ENCODE measurements at regions of chr5 and their contacts with region 1.

Region 1: GRCh38 chr5:158819840-158820620 is 279.7 kb downstream of the EBF1 start:
- DNase-seq: peak; percentile 41
- ATAC-seq: peak; percentile 99
- H3K4me3 Mint-ChIP-seq: no peak overlapping the region
- H3K27ac Mint-ChIP-seq: peak overlapping the region; percentile 48
- H3K4me1 Mint-ChIP-seq: peaks cover 31% of the 10 kb centered on the region
- H3K27me3 Mint-ChIP-seq: peaks cover 10% of the 10 kb centered on the region

Region 2: GRCh38 chr5:158875272-158875679 is 55.2 kb after region 1 on chr5:
- CTCF ChIA-PET with region 1: no interaction called
- POLR2A ChIA-PET with region 1: no interaction called
- intact Hi-C with region 1: loop called (anchors 1 to 2 kb)
- DNase-seq: no peak
- ATAC-seq: peak; percentile 71
- H3K4me3 Mint-ChIP-seq: peak overlapping the region; percentile 13
- H3K27ac Mint-ChIP-seq: no peak overlapping the region
- H3K4me1 Mint-ChIP-seq: peaks cover 27% of the 10 kb centered on the region
- H3K27me3 Mint-ChIP-seq: peaks cover 4% of the 10 kb centered on the region

Measured in activated CD4-positive, alpha-beta T cell treated with anti-CD3 and anti-CD28 coated beads for 36 hours (primary cell).